ENCODE measurements at regions of chr7 and their contacts with region 1.

Region 1: DNA sequence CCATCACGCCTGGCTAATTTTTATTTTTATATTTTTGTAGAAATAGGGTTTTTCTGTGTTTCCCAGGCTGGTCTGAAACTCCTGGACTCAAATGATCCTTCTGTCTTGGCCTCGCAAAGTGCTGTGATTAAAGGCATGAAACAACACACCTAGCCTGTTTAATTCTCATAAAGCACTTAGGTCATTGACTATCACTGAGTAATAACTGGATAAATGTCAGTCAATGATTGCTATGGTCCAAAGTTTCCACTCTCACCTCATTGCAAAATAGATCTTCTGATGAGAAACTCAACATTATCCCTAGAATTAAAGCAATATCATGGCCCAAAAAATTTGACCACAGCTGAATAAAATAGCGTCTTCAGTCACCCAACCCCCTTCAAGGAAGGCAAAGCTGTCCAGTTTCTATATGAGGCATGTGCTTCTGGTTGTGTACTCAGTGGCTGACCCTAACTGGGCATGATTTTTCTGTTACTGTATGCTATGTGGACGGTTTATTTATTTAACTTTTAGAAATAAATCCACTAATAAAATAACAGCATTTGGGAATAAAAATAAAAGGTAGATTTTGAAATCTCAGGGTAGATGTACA is 86.5 kb upstream of the LRRN3 start:
- DNase-seq: no peak
- ATAC-seq: no peak
- H3K4me3 ChIP-seq: no peak overlapping the region
- H3K4me3 Mint-ChIP-seq: no peak overlapping the region
- H3K27ac ChIP-seq: no peak overlapping the region
- H3K27ac Mint-ChIP-seq: no peak overlapping the region
- H3K4me1 ChIP-seq: peaks cover 0 to 28% of the 10 kb centered on the region in 2 experiments
- H3K4me1 Mint-ChIP-seq: peaks cover 5 to 20% (median 16%) of the 10 kb centered on the region in 3 donors
- H3K27me3 ChIP-seq: no peaks in the 10 kb centered on the region
- H3K27me3 Mint-ChIP-seq: no peaks in the 10 kb centered on the region

Region 2: GRCh38 chr7:110918949-110919548 is 85.4 kb before region 1 on chr7:
- CTCF ChIA-PET with region 1: no interaction called
- POLR2A ChIA-PET with region 1: no interaction called
- DNase-seq: no peak
- ATAC-seq: no peak
- H3K4me3 ChIP-seq: no peak overlapping the region
- H3K4me3 Mint-ChIP-seq: no peak overlapping the region
- H3K27ac ChIP-seq: no peak overlapping the region
- H3K27ac Mint-ChIP-seq: no peak overlapping the region
- H3K4me1 ChIP-seq: no peaks in the 10 kb centered on the region
- H3K4me1 Mint-ChIP-seq: peaks cover 0 to 3% (median 0%) of the 10 kb centered on the region in 3 donors
- H3K27me3 ChIP-seq: no peaks in the 10 kb centered on the region
- H3K27me3 Mint-ChIP-seq: no peaks in the 10 kb centered on the region

Region 3: GRCh38 chr7:111540199-111540815 is 535.9 kb after region 1 on chr7:
- CTCF ChIA-PET with region 1: no interaction called
- POLR2A ChIA-PET with region 1: interaction called in 1 of 2 experiments, 13 read pairs
- DNase-seq: no peak
- ATAC-seq: no peak
- H3K4me3 ChIP-seq: no peak overlapping the region
- H3K4me3 Mint-ChIP-seq: no peak overlapping the region
- H3K27ac ChIP-seq: no peak overlapping the region
- H3K27ac Mint-ChIP-seq: no peak overlapping the region
- H3K4me1 ChIP-seq: no peaks in the 10 kb centered on the region
- H3K4me1 Mint-ChIP-seq: peaks cover 0 to 18% (median 2%) of the 10 kb centered on the region in 3 donors
- H3K27me3 ChIP-seq: no peaks in the 10 kb centered on the region
- H3K27me3 Mint-ChIP-seq: no peaks in the 10 kb centered on the region